Natural killer cell (primary cell): ENCODE measurements at regions of chr2 and their contacts with region 1.

Region 1: DNA sequence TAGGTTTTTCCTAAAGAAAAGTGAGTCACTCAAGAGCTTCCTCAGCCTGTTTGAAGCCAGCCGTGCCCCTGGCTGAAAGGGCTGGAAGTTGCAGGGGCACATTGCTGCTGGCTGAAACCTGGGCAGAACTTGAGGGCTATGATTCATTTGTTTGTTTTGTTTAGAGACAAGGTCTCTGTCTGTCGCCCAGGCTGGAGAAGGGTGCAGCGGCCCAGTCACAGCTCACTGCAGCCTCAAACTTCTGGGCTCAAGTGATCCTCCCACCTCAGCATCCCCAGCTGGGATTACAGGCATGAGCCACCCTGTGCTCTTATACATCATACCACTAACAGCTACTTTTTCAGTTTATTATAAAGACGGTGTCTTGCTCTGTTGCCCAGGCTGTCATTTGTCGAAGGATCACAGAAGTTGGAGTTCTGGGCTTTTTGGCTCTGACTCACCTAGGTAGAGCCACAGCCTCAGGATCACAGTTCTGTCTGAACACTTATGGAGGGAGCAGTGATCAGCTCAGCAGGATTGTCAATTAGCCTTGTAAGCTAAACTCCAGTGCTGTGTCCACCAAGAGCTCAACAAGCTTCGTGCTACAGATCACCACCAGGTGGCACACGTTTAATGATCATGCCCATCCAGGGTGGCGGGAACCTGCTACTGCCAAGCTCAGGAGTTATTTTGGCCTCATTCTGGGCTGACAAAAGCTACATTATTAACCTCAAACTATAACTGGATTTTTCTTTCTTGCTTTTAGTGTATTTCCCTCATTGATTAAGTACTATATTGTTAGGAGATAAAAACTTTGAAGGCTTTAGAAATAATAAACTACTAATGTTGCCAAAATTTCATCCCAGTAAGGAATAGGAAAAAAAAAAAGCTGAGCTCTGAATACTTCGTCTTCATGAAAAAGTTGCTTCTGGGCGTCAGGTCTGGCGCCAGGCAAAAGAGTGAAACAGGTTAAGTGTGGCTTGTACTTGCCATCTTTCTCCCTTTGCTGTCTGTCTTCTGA is 57.9 kb downstream of the ARHGEF33 start:
- DNase-seq: peak; percentile 24 to 77
- ATAC-seq: peak; percentile 63 to 71 (median 63)
- H3K4me3 ChIP-seq: no peak overlapping the region
- H3K4me3 Mint-ChIP-seq: no peak overlapping the region
- H3K27ac ChIP-seq: no peak overlapping the region
- H3K27ac Mint-ChIP-seq: no peak overlapping the region
- H3K4me1 ChIP-seq: no peaks in the 10 kb centered on the region
- H3K4me1 Mint-ChIP-seq: no peaks in the 10 kb centered on the region
- H3K27me3 ChIP-seq: no peaks in the 10 kb centered on the region
- H3K27me3 Mint-ChIP-seq: peaks cover 3 to 16% of the 10 kb centered on the region in 2 donors
- CTCF ChIP-seq: peak; percentile 59

Region 2: GRCh38 chr2:38935568-38936172 is 11.9 kb before region 1 on chr2:
- intact Hi-C with region 1: no loop called
- DNase-seq: no peak
- ATAC-seq: no peak
- H3K4me3 ChIP-seq: no peak overlapping the region
- H3K4me3 Mint-ChIP-seq: no peak overlapping the region
- H3K27ac ChIP-seq: no peak overlapping the region
- H3K27ac Mint-ChIP-seq: no peak overlapping the region
- H3K4me1 ChIP-seq: no peaks in the 10 kb centered on the region
- H3K4me1 Mint-ChIP-seq: no peaks in the 10 kb centered on the region
- H3K27me3 ChIP-seq: no peaks in the 10 kb centered on the region
- H3K27me3 Mint-ChIP-seq: peaks cover 4 to 9% of the 10 kb centered on the region in 2 donors
- CTCF ChIP-seq: no peak

Region 3: DNA sequence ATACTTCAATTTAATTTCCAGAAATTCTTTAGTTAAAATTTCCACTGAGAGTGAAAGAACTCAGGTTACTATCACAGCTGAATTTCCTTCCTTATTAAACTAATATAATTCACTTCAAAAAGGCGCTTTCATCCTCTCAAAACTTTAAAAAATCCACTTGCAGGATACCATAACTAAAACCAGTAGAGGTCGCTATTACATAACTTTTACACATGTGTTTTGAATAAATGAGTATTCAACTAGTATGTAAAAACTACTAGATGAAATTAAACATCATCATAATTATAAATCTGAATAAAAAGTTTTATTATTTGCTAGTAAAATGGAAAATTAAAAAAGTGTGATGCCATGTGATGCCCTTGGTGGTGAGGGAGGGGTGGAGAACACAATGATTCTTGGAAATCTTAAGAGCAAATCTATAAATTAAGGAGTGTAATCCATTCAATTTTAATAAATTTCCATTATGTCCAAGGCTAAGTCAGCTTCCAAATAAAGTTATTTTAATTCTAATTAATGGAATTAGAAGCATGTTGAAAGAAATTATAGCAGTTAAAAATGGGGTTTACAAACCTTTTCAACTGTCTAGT is 111.9 kb after region 1 on chr2:
- intact Hi-C with region 1: loop called (anchors 2 kb)
- DNase-seq: peak in 1 of 2 donors; percentile 77
- ATAC-seq: peak in 1 of 3 donors; percentile 58
- H3K4me3 ChIP-seq: no peak overlapping the region
- H3K4me3 Mint-ChIP-seq: no peak overlapping the region
- H3K27ac ChIP-seq: no peak overlapping the region
- H3K27ac Mint-ChIP-seq: peak overlapping the region in 1 of 2 donors; percentile 38
- H3K4me1 ChIP-seq: no peaks in the 10 kb centered on the region
- H3K4me1 Mint-ChIP-seq: peaks cover 13 to 17% of the 10 kb centered on the region in 2 donors
- H3K27me3 ChIP-seq: no peaks in the 10 kb centered on the region
- H3K27me3 Mint-ChIP-seq: no peaks in the 10 kb centered on the region
- CTCF ChIP-seq: peak; percentile 95

Region 4: GRCh38 chr2:39665811-39666490 is 718.4 kb after region 1 on chr2 and contains the start of gene TMEM178A:
- intact Hi-C with region 1: no loop called
- DNase-seq: no peak
- ATAC-seq: no peak
- H3K4me3 ChIP-seq: no peak within 1 kb of the TSS
- H3K4me3 Mint-ChIP-seq: peak within 1 kb of the TSS; percentile 18
- H3K27ac ChIP-seq: no peak within 1 kb of the TSS
- H3K27ac Mint-ChIP-seq: no peak within 1 kb of the TSS
- H3K4me1 ChIP-seq: peaks cover 4% of the 10 kb centered on the region
- H3K4me1 Mint-ChIP-seq: peaks cover 5 to 12% of the 10 kb centered on the region in 2 donors
- H3K27me3 ChIP-seq: peaks cover 20% of the 10 kb centered on the region
- H3K27me3 Mint-ChIP-seq: peaks cover 56 to 79% of the 10 kb centered on the region in 2 donors
- CTCF ChIP-seq: no peak
- total RNA-seq, gene TMEM178A: 0.21 TPM in 1 of 3 donors, not detected in the others